HepG2 (cell line): ENCODE measurements at regions of chr20 and their contacts with region 1.

Region 1: GRCh38 chr20:35664544-35665221 is at the starts of genes CPNE1 and RBM12:
- DNase-seq: peak; percentile 96
- ATAC-seq: peak; percentile 92
- H3K4me3 ChIP-seq: peak within 1 kb of the TSS; percentile 76 to 99 (median 79)
- H3K27ac ChIP-seq: peak within 1 kb of the TSS; percentile 90
- H3K4me1 ChIP-seq: peaks cover 41% of the 10 kb centered on the region
- H3K27me3 ChIP-seq: no peaks in the 10 kb centered on the region; a peak in 1 of 5 replicates
- CTCF ChIP-seq: peak; percentile 30; the same call in 1 of the 2 replicates
- EP300 ChIP-seq: no peak; a peak in 1 of 4 replicates
- POLR2A ChIP-seq: peak; percentile 96 to 99
- RAD21 ChIP-seq: peak; percentile 71
- total RNA-seq, gene CPNE1: 431 and 439 TPM in 2 replicates
- total RNA-seq, gene RBM12: 104 and 111 TPM in 2 replicates

Region 2: DNA sequence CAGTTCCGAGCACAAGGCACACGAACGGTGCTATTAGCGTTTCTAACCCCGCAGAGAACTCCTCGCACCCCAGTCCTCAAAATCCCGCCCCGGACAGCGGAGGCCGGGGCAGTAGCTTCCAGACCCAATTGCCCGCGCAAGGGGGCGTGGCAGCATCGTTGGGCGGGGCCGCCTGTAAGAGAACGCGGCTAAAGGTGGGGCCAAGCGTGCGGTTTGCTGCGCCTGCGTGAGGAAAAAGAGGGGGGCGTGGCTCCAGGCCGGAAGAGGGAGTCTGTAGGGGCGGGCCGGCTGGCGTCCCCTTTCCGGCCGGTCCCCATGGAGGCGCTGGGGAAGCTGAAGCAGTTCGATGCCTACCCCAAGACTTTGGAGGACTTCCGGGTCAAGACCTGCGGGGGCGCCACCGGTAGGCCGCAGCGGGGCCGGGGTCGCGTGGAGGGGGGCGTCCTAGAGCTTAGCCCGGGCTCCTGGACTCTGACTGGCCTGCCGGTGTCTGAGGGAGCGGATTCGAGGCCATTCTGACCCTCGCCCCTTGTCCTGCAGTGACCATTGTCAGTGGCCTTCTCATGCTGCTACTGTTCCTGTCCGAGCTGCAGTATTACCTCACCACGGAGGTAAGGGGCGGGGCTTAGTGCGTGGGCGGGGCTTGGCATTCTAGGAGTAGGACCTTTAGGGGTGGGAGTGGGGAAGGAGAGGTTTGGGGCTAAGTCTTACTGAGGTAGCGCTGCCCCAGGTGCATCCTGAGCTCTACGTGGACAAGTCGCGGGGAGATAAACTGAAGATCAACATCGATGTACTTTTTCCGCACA is 122.7 kb before region 1 on chr20 and contains the start of gene ERGIC3:
- CTCF ChIA-PET with region 1: no interaction called
- POLR2A ChIA-PET with region 1: interaction called, 13 read pairs
- in situ Hi-C with region 1: no loop called
- intact Hi-C with region 1: no loop called
- DNase-seq: peak; percentile 97
- ATAC-seq: peak; percentile 93
- H3K4me3 ChIP-seq: peak within 1 kb of the TSS; percentile 74 to 93 (median 79)
- H3K27ac ChIP-seq: peak within 1 kb of the TSS; percentile 85
- H3K4me1 ChIP-seq: peaks cover 29% of the 10 kb centered on the region
- H3K27me3 ChIP-seq: no peaks in the 10 kb centered on the region
- CTCF ChIP-seq: peak; percentile 43; the same call in 1 of the 2 replicates
- EP300 ChIP-seq: no peak
- POLR2A ChIP-seq: peak; percentile 82 to 92
- RAD21 ChIP-seq: no peak; the same call in 1 of the 2 replicates
- total RNA-seq, gene ERGIC3: 224 and 407 TPM in 2 replicates

Region 3: GRCh38 chr20:35635652-35636051 is 29.0 kb before region 1 on chr20:
- CTCF ChIA-PET with region 1: no interaction called
- POLR2A ChIA-PET with region 1: interaction called, 16 read pairs
- in situ Hi-C with region 1: no loop called
- intact Hi-C with region 1: no loop called
- DNase-seq: peak; percentile 76
- ATAC-seq: peak; percentile 76
- H3K4me3 ChIP-seq: no peak overlapping the region
- H3K27ac ChIP-seq: peak overlapping the region; percentile 68
- H3K4me1 ChIP-seq: peaks cover 34% of the 10 kb centered on the region
- H3K27me3 ChIP-seq: no peaks in the 10 kb centered on the region
- CTCF ChIP-seq: no peak
- EP300 ChIP-seq: no peak
- POLR2A ChIP-seq: no peak; a peak in 1 of 4 replicates
- RAD21 ChIP-seq: no peak

Region 4: GRCh38 chr20:35652641-35653429 is 11.8 kb before region 1 on chr20:
- CTCF ChIA-PET with region 1: no interaction called
- POLR2A ChIA-PET with region 1: interaction called, 13 read pairs
- in situ Hi-C with region 1: no loop called
- intact Hi-C with region 1: no loop called
- DNase-seq: no peak
- ATAC-seq: peak; percentile 68
- H3K4me3 ChIP-seq: no peak overlapping the region
- H3K27ac ChIP-seq: no peak overlapping the region
- H3K4me1 ChIP-seq: peaks cover 14% of the 10 kb centered on the region; the same call in 1 of the 2 replicates
- H3K27me3 ChIP-seq: no peaks in the 10 kb centered on the region
- CTCF ChIP-seq: no peak
- EP300 ChIP-seq: no peak
- POLR2A ChIP-seq: peak; percentile 16 to 29; a peak in 2 of 4 replicates
- RAD21 ChIP-seq: no peak